ENCODE measurements at regions of chr7 and their contacts with region 1.

Region 1: GRCh38 chr7:24896031-24896501 is 83.9 kb downstream of the OSBPL3 start:
- DNase-seq: no peak
- ATAC-seq: no peak
- H3K4me3 ChIP-seq: no peak overlapping the region
- H3K27ac ChIP-seq: no peak overlapping the region
- H3K4me1 ChIP-seq: no peaks in the 10 kb centered on the region
- CTCF ChIP-seq: no peak
- EP300 ChIP-seq: no peak
- POLR2A ChIP-seq: no peak
- RAD21 ChIP-seq: no peak

Region 2: DNA sequence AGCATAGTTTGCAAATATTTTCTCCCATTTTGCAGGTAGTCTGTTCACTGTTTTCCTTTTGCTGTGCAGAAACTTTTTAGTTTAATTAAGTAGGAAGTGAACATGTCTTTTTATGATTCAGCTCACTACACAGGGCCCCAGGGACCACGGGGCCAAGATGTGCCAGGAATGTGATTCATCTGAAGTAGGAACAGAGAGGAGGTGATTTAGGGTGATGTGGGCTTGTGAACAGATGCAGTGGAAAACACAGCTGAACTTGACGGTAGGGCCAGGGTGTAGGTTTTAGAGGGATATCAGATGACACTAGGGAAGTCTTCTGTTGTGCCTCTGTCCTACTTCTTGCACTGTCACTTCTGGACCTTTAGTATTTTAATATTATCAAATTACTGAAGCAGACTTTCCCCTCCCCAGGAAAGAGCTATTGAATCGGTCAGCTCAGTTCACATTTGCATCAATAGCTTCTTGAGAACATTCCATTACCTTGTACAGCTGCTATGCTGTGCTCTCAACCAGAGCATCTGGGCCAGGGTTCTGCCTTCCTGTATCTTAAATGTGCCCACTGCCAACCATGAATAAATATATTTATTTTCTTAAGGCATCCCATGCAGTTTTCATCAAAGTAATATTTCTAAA is 13.0 kb before region 1 on chr7:
- CTCF ChIA-PET with region 1: interaction called, 10 read pairs
- POLR2A ChIA-PET with region 1: no interaction called
- DNase-seq: no peak
- ATAC-seq: no peak
- H3K4me3 ChIP-seq: no peak overlapping the region
- H3K27ac ChIP-seq: no peak overlapping the region
- H3K4me1 ChIP-seq: peaks cover 15% of the 10 kb centered on the region
- CTCF ChIP-seq: no peak
- EP300 ChIP-seq: no peak
- POLR2A ChIP-seq: no peak
- RAD21 ChIP-seq: no peak

Region 3: DNA sequence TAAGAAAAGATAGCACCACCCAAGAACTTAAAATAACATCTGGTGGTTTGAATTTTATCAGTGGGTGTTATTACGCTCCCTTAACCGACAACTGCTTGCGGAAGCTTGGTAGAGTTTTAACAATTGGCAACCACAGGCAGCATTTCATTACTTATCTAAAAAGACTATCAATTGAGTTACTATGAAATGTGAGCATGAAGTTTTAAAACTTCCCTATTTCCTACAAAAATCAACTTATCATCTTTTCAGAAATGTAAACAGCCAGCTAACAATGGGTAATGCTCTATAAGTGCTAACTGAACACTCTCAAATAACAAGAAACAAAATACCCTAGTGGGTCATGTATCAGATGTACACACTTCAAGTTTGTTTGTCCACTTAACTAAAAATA is 15.1 kb after region 1 on chr7:
- CTCF ChIA-PET with region 1: interaction called, 11 read pairs
- POLR2A ChIA-PET with region 1: no interaction called
- DNase-seq: no peak
- ATAC-seq: no peak
- H3K4me3 ChIP-seq: no peak overlapping the region
- H3K27ac ChIP-seq: no peak overlapping the region
- H3K4me1 ChIP-seq: peaks cover 20% of the 10 kb centered on the region
- CTCF ChIP-seq: no peak
- EP300 ChIP-seq: no peak
- POLR2A ChIP-seq: no peak
- RAD21 ChIP-seq: no peak

Region 4: GRCh38 chr7:25333296-25333928 is 437.3 kb after region 1 on chr7:
- CTCF ChIA-PET with region 1: no interaction called
- POLR2A ChIA-PET with region 1: no interaction called
- DNase-seq: no peak
- ATAC-seq: no peak
- H3K4me3 ChIP-seq: no peak overlapping the region
- H3K27ac ChIP-seq: no peak overlapping the region
- H3K4me1 ChIP-seq: no peaks in the 10 kb centered on the region
- CTCF ChIP-seq: no peak
- EP300 ChIP-seq: no peak
- POLR2A ChIP-seq: no peak
- RAD21 ChIP-seq: no peak

Measured in A549 (cell line).